Caco-2 (cell line): ENCODE measurements at regions of chr11 and their contacts with region 1.

Region 1: GRCh38 chr11:73578592-73579185 is 19.2 kb downstream of the FAM168A start:
- DNase-seq: no peak
- H3K4me3 ChIP-seq: no peak overlapping the region
- H3K4me3 Mint-ChIP-seq: no peak overlapping the region
- H3K27ac Mint-ChIP-seq: no peak overlapping the region
- H3K4me1 ChIP-seq: peaks cover 4% of the 10 kb centered on the region; the same call in 1 of the 2 replicates
- H3K4me1 Mint-ChIP-seq: no peaks in the 10 kb centered on the region
- H3K27me3 ChIP-seq: no peaks in the 10 kb centered on the region
- H3K27me3 Mint-ChIP-seq: no peaks in the 10 kb centered on the region
- CTCF ChIP-seq: no peak

Region 2: GRCh38 chr11:73478738-73479347 is 99.8 kb before region 1 on chr11:
- CTCF ChIA-PET with region 1: no interaction called
- POLR2A ChIA-PET with region 1: no interaction called
- intact Hi-C with region 1: loop called (anchors 5 kb)
- DNase-seq: peak in 1 of 2 experiments; percentile 63
- H3K4me3 ChIP-seq: no peak overlapping the region
- H3K4me3 Mint-ChIP-seq: no peak overlapping the region
- H3K27ac Mint-ChIP-seq: no peak overlapping the region
- H3K4me1 ChIP-seq: peaks cover 5% of the 10 kb centered on the region; the same call in 1 of the 2 replicates
- H3K4me1 Mint-ChIP-seq: peaks cover 6% of the 10 kb centered on the region
- H3K27me3 ChIP-seq: no peaks in the 10 kb centered on the region
- H3K27me3 Mint-ChIP-seq: no peaks in the 10 kb centered on the region
- CTCF ChIP-seq: peak; percentile 95 to 98

Region 3: DNA sequence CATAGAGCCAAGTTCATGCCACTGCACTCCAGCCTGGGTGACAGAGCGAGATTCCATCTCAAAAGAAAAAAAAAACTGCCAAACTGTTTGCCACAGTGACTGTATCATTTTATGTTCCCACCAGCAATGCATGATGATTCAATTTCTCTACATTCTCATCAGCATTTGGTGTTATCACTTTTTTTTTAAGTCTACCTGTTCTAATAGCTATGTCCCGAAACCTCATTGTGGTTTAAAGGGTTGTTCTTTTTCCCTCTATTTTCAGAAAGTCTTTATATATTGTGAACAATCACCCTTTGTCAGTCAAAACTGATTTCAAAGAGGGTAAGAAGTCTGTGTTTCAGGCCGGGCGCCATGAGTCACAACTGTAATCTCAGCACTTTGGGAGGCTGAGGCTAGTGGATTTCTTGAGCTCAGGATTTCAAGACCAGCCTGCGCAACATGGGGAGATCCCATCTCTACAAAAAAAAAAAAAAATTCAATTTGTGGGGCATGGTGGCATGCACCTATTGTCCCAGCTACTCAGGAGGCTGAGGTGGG is 34.0 kb after region 1 on chr11:
- CTCF ChIA-PET with region 1: no interaction called
- POLR2A ChIA-PET with region 1: interaction called, 11 read pairs
- intact Hi-C with region 1: no loop called
- DNase-seq: no peak
- H3K4me3 ChIP-seq: no peak overlapping the region
- H3K4me3 Mint-ChIP-seq: no peak overlapping the region
- H3K27ac Mint-ChIP-seq: no peak overlapping the region
- H3K4me1 ChIP-seq: no peaks in the 10 kb centered on the region
- H3K4me1 Mint-ChIP-seq: no peaks in the 10 kb centered on the region
- H3K27me3 ChIP-seq: no peaks in the 10 kb centered on the region
- H3K27me3 Mint-ChIP-seq: no peaks in the 10 kb centered on the region
- CTCF ChIP-seq: no peak